Aorta (tissue), 5 donors: ENCODE measurements at regions of chr5 and their contacts with region 1.

Region 1: DNA sequence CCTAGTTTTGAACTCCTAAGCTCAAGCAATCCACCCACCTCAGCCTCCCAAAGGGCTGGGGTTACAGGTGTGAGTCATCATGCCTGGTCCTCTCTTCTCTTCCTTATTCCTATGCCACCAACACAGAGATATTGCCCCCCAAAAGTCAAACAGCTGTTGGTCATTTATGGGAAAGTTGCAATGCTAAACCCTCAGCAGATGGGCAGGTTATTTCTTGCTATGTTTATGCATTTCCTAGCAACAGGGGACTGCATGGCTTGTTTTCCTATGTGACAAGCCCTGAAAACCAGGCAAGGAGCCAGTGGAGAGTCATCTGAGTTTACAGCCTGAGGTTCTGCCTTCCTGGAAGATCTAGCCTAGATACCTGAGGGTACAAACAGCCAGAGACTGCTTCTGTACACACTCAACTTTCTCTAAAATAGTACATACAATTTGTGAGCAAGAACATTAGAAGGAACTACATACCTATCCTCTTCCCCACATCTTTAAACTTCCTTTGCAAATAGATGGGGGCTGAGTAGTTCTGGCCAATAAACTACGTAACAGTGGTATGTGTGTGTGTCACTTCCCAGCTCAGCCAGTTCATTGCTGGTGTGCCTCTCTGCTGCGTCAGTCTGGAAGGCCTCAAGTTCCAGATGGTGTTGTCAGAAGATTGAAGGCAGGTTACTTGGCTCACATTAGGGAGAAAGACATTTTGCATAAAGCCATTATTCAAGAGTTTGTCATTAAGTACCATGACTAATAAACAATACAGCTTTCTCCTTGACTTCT is 65.4 kb downstream of the CSNK1A1 start:
- DNase-seq: peak in 1 of 2 donors; percentile 86
- ATAC-seq: peak; percentile 86
- H3K4me3 ChIP-seq: no peak overlapping the region
- H3K27ac ChIP-seq: peak overlapping the region; percentile 79 to 87
- H3K4me1 ChIP-seq: peaks cover 10 to 11% of the 10 kb centered on the region in 2 donors
- H3K27me3 ChIP-seq: no peaks in the 10 kb centered on the region

Region 2: GRCh38 chr5:149448831-149449714 is 36.8 kb before region 1 on chr5:
- intact Hi-C with region 1: loop called (anchors 2 kb)
- DNase-seq: no peak
- ATAC-seq: no peak
- H3K4me3 ChIP-seq: no peak overlapping the region
- H3K27ac ChIP-seq: peak overlapping the region; percentile 53 to 88
- H3K4me1 ChIP-seq: peaks cover 0 to 3% of the 10 kb centered on the region in 2 donors
- H3K27me3 ChIP-seq: no peaks in the 10 kb centered on the region

Region 3: GRCh38 chr5:149849966-149850910 is 364.4 kb after region 1 on chr5:
- intact Hi-C with region 1: no loop called
- DNase-seq: no peak
- ATAC-seq: no peak
- H3K4me3 ChIP-seq: no peak overlapping the region
- H3K27ac ChIP-seq: no peak overlapping the region
- H3K4me1 ChIP-seq: no peaks in the 10 kb centered on the region
- H3K27me3 ChIP-seq: no peaks in the 10 kb centered on the region